ENCODE measurements at regions of chr21 and their contacts with region 1.

Region 1: DNA sequence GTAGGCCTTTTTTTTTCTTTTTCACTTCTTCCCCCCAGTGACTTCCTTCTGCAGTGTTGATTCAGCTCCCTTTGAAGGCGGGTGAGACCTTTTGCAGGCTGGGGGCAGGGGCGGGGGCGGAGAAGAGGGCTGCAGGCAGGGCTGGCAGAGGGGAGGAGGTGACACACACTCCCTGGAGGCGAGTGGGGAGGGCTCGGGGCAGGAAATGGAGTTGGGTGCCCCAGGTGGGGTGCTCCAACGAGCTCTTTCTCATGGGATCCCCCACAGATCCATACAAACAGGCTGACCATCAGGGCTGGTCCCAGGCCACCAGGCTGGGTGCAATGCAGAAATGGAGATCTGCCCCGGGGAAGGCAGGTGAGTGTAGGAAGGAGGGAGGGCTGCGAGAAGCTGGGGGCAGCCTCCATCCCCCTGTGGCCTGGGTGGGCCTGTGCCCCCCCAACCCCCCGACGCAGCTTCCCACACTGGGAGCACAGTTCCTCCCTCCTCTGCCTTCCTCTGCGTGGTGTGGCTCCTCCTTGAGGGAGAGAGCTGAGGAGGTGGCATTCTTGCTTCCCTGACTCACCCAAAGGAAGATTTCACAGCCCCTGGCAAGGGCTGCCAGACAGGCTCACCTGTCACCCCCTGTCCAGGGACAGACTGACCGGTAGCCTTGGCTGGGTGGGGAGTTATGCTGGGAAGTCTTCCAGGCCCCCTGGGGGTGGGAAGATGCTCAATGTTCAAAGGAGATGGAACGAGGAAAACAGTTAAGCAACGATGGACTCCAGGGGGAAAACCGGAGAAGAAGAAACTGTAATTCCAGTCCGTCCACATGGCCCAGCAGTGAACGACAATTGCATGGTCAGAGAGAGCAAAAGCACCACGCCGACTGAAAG is 7.1 kb upstream of the ITGB2 start:
- DNase-seq: peak; percentile 77 to 96 (median 82)
- H3K4me3 ChIP-seq: peak overlapping the region; percentile 66 to 88
- H3K4me3 Mint-ChIP-seq: peak overlapping the region; percentile 85 to 97 (median 94)
- H3K27ac ChIP-seq: peak overlapping the region; percentile 84
- H3K27ac Mint-ChIP-seq: peak overlapping the region; percentile 93 to 99 (median 95)
- H3K4me1 ChIP-seq: peaks cover 86% of the 10 kb centered on the region
- H3K4me1 Mint-ChIP-seq: peaks cover 56 to 84% (median 72%) of the 10 kb centered on the region in 4 donors
- H3K27me3 ChIP-seq: no peaks in the 10 kb centered on the region
- H3K27me3 Mint-ChIP-seq: no peaks in the 10 kb centered on the region

Region 2: DNA sequence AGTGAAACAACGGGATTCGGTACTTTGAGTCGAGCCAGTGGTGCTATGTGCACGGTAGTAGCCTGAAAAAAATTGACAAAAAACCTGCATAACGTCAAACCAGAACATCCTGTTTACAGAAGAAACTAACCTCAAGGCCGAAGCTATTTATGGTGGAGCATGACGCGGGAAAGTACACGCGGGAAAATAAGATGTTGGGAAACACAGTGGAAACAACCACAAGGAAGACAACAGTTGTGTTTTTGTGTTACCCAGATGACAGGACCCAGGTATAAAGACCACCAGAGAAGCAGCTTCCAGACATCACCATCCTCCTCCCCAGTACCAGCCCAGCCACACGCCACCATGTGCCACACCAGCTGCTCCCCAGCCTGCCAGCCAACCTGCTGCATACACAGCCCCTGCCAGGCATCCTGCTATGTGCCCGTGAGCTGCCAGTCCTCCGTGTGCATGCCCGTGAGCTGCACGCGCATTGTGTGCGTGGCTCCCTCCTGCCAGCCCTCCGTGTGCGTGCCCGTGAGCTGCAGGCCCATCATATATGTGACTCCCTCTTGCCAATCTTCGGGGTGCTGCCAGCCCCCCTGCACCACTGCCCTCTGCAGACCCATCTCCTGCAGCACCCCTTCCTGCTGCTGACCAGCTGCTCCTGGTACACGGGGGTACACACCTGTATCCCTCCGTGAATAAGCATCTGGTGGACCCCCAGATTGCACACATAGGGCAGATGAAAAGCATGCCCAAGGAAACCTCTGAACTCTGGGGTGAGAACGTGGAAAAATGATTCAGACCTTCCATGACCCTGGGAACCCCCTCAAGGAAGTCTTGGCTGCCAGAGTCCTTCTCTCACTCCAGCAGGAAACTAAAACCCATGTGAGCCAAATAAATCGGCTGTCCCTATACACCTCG is 269.9 kb before region 1 on chr21 and contains the start of gene KRTAP12-3:
- CTCF ChIA-PET with region 1: no interaction called
- POLR2A ChIA-PET with region 1: interaction called, 17 read pairs
- intact Hi-C with region 1: no loop called
- DNase-seq: peak; percentile 85 to 92 (median 87)
- H3K4me3 ChIP-seq: peak within 1 kb of the TSS; percentile 4 to 32
- H3K4me3 Mint-ChIP-seq: peak within 1 kb of the TSS; percentile 73 to 83 (median 78)
- H3K27ac ChIP-seq: peak within 1 kb of the TSS; percentile 64
- H3K27ac Mint-ChIP-seq: peak within 1 kb of the TSS; percentile 94 to 99 (median 98)
- H3K4me1 ChIP-seq: peaks cover 68% of the 10 kb centered on the region
- H3K4me1 Mint-ChIP-seq: peaks cover 53 to 78% (median 64%) of the 10 kb centered on the region in 4 donors
- H3K27me3 ChIP-seq: no peaks in the 10 kb centered on the region
- H3K27me3 Mint-ChIP-seq: no peaks in the 10 kb centered on the region
- total RNA-seq, gene KRTAP12-3: not detected

Region 3: DNA sequence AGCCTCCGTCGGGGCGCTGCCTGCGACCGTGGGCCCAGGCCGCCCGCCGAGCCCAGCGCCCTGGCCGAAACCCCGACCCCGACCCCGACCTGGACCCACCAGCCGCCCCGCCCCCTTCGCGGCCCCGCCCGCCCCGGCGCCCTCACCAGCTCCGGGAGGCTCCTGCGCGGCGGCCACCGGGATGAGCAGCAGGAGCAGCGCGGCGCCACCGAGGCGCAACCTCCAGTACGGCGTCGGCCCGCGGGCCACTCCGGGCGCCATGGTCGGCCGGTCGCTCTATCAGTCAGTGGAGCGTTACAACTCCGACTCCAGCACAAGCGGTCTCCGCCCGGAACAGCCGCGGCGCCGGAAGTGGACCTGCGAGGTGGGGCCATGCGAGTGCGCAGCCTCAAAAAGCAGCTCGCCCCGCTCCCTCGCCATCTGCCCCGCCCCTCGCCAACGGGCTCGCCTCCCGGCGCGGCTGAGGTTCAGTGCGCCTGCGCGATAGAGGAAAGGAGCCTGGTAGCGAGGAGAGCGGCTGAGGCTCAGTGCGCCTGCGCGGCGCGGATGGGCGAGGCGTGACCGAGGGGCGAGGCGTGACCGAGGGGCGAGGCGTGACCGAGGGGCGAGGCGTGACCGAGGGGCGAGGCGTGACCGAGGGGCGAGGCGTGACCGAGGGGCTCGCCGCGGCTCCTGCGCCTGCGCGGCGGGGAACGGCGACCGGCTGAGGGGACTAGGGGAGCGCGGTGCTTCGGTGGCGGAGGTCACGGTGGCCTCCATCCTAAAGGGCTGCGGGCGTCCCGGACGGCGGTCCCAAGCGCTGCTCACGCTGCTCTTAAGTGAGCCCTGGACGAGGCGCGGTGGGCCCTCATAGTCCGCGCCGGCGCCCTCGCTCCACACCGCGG is 54.2 kb before region 1 on chr21 and contains the start of gene PTTG1IP:
- CTCF ChIA-PET with region 1: interaction called, 13 read pairs
- POLR2A ChIA-PET with region 1: interaction called, 173 read pairs
- intact Hi-C with region 1: loop called (anchors 1 kb)
- DNase-seq: peak; percentile 98 to 99 (median 99)
- H3K4me3 ChIP-seq: peak within 1 kb of the TSS; percentile 67 to 70
- H3K4me3 Mint-ChIP-seq: peak within 1 kb of the TSS; percentile 92 to 97 (median 95)
- H3K27ac ChIP-seq: peak within 1 kb of the TSS; percentile 76
- H3K27ac Mint-ChIP-seq: peak within 1 kb of the TSS; percentile 92 to 98 (median 97)
- H3K4me1 ChIP-seq: peaks cover 55% of the 10 kb centered on the region
- H3K4me1 Mint-ChIP-seq: peaks cover 37 to 59% (median 48%) of the 10 kb centered on the region in 4 donors
- H3K27me3 ChIP-seq: no peaks in the 10 kb centered on the region
- H3K27me3 Mint-ChIP-seq: no peaks in the 10 kb centered on the region
- total RNA-seq, gene PTTG1IP: 98.7 to 110 TPM

Region 4: GRCh38 chr21:44892536-44893277 is 35.1 kb before region 1 on chr21:
- CTCF ChIA-PET with region 1: interaction called, 253 read pairs
- POLR2A ChIA-PET with region 1: interaction called, 267 read pairs
- intact Hi-C with region 1: loop called (anchors 1 kb)
- DNase-seq: peak; percentile 64 to 80 (median 76)
- H3K4me3 ChIP-seq: no peak overlapping the region
- H3K4me3 Mint-ChIP-seq: peak overlapping the region in 1 of 8 donors; percentile 35
- H3K27ac ChIP-seq: no peak overlapping the region
- H3K27ac Mint-ChIP-seq: peak overlapping the region in 6 of 7 donors; percentile 64 to 92 (median 85)
- H3K4me1 ChIP-seq: peaks cover 19% of the 10 kb centered on the region
- H3K4me1 Mint-ChIP-seq: peaks cover 10 to 29% (median 14%) of the 10 kb centered on the region in 4 donors
- H3K27me3 ChIP-seq: no peaks in the 10 kb centered on the region
- H3K27me3 Mint-ChIP-seq: no peaks in the 10 kb centered on the region

Region 5: GRCh38 chr21:44911389-44912157 is 16.3 kb before region 1 on chr21:
- CTCF ChIA-PET with region 1: interaction called, 93 read pairs
- POLR2A ChIA-PET with region 1: interaction called, 756 read pairs
- intact Hi-C with region 1: loop called (anchors 1 kb)
- DNase-seq: peak; percentile 72 to 80 (median 79)
- H3K4me3 ChIP-seq: peak overlapping the region; percentile 42 to 43
- H3K4me3 Mint-ChIP-seq: peak overlapping the region; percentile 63 to 90 (median 83)
- H3K27ac ChIP-seq: peak overlapping the region; percentile 61
- H3K27ac Mint-ChIP-seq: peak overlapping the region; percentile 88 to 98 (median 94)
- H3K4me1 ChIP-seq: peaks cover 92% of the 10 kb centered on the region
- H3K4me1 Mint-ChIP-seq: peaks cover 35 to 80% (median 54%) of the 10 kb centered on the region in 4 donors
- H3K27me3 ChIP-seq: no peaks in the 10 kb centered on the region
- H3K27me3 Mint-ChIP-seq: no peaks in the 10 kb centered on the region

Region 6: DNA sequence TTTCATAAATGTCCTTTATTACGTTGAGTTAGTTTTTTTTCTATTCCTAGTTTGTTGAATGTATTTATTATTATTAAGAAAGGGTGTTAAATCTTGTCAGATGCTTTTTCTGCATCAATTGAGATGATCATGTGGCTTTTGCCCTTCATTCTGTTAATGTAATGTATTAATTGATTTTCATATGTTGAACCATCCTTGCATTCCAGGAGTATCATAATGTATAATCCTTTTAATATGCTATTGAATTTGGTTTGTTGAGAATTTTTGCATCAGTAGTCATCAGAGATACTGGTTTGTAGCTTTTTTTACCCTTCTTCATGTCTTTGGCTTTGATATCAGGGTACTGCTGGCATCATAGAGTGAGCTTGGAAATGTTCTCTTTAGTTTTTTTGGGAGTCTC is 259.8 kb after region 1 on chr21:
- CTCF ChIA-PET with region 1: no interaction called
- POLR2A ChIA-PET with region 1: no interaction called
- intact Hi-C with region 1: no loop called
- DNase-seq: no peak
- H3K4me3 ChIP-seq: no peak overlapping the region
- H3K4me3 Mint-ChIP-seq: no peak overlapping the region
- H3K27ac ChIP-seq: no peak overlapping the region
- H3K27ac Mint-ChIP-seq: no peak overlapping the region
- H3K4me1 ChIP-seq: no peaks in the 10 kb centered on the region
- H3K4me1 Mint-ChIP-seq: peaks cover 0 to 2% (median 0%) of the 10 kb centered on the region in 4 donors
- H3K27me3 ChIP-seq: no peaks in the 10 kb centered on the region
- H3K27me3 Mint-ChIP-seq: no peaks in the 10 kb centered on the region

Measured in CD4-positive, alpha-beta memory T cell (primary cell).